ENCODE measurements at regions of chr22 and their contacts with region 1.

Region 1: DNA sequence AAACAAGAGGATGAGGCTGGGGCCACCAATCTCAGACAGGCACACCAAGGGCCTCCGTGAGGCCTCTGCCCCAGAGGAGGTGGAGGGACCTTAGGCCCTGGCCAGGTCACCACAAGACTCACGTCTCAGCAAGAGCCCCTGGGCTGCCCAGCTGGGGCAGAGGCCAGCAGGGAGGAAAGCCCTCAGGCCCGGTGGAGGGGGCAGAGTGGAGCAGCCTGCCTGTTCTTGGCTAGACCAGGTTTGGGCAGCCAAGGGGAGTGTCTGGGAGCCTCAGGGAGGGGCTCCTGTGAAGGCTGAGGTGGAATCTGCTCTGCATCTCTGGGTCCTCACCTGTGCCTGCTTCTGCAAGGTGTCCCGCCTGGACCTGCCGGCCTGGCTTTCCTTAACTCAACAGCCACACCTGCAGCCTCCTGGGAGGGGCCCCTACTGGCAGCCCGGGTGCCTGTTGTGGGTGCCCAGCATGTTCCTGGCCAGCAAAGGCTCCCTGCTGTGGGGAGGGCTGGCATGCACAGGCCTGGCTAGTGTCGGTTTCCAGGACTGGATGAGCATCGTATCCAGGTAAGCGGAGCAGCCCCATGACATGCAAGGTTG is 11.9 kb downstream of the TTLL12 start:
- DNase-seq: no peak
- ATAC-seq: no peak

Region 2: GRCh38 chr22:42994881-42995562 is 180.0 kb before region 1 on chr22:
- intact Hi-C with region 1: no loop called
- DNase-seq: no peak
- ATAC-seq: peak; percentile 79 to 80

Region 3: DNA sequence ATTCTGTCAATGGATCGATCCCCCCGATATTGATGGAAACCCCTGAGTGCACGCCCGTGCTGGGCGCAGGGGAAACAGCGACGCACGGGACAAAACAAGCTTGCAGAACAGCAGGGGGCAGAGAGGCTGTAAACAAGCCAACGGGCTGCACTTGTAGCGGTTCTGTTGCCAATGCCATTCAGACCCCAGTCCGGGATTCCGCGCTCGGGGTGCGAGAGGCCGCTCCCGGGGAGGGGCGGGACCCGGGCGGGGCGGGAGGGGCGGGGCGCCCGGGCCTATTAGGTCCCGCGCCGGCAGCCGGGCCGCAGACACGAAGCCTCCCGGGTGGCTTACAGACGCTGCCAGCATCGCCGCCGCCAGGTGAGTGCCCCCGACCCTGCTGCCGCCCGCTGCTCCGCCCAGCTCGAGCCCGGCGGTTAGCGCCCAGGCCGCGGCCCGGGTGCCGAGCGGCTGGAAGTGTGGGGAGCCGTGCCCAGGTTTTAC is 64.6 kb before region 1 on chr22 and contains the start of gene BIK:
- intact Hi-C with region 1: loop called in 1 of 2 experiments (anchors 10 kb)
- DNase-seq: peak; percentile 52
- ATAC-seq: peak; percentile 56 to 77
- total RNA-seq, gene BIK: not detected

Region 4: DNA sequence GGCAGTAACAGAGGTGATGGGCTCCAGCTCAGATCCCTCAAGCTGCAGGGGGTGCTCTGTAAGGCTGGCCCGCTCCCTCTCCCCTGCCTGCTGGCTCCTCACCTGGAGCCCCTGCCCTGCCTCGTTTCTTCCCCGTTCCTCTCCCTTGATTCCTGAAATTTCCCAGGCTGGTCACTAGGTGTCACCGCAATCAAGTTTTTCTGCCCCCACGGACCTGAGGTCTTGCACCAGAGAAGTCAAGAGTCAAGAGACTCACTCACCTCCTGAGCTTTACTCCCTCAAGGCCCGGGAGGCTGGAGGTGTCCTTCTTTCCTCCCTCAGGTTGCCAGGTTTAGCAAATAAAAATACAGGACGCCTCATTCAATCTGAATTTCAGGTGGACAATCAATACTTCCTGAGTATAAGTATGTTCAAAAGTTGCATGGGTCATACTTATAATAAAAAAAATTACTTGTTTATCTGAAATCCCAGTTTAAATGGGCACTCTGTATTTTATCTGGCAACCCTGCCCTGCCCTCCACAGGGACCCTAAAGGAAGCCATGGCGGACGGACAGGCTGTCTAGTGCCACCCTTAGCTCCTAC is 99.0 kb after region 1 on chr22:
- intact Hi-C with region 1: no loop called
- DNase-seq: no peak
- ATAC-seq: peak; percentile 60 to 70

Measured in left cardiac atrium (tissue), 4 donors.